ENCODE measurements at regions of chr14 and their contacts with region 1.

Region 1: GRCh38 chr14:68788996-68789820 is 3.7 kb downstream of the ZFP36L1 start:
- DNase-seq: peak; percentile 75 to 94 (median 90)
- ATAC-seq: peak; percentile 36
- H3K4me3 ChIP-seq: peak overlapping the region; percentile 94 to 97
- H3K4me3 Mint-ChIP-seq: peak overlapping the region; percentile 92
- H3K27ac ChIP-seq: peak overlapping the region; percentile 99 to 100
- H3K27ac Mint-ChIP-seq: peak overlapping the region; percentile 100
- H3K4me1 ChIP-seq: peaks cover 53% of the 10 kb centered on the region
- H3K4me1 Mint-ChIP-seq: peaks cover 58% of the 10 kb centered on the region
- H3K27me3 ChIP-seq: no peaks in the 10 kb centered on the region
- H3K27me3 Mint-ChIP-seq: no peaks in the 10 kb centered on the region
- CTCF ChIP-seq: peak; percentile 84

Region 2: DNA sequence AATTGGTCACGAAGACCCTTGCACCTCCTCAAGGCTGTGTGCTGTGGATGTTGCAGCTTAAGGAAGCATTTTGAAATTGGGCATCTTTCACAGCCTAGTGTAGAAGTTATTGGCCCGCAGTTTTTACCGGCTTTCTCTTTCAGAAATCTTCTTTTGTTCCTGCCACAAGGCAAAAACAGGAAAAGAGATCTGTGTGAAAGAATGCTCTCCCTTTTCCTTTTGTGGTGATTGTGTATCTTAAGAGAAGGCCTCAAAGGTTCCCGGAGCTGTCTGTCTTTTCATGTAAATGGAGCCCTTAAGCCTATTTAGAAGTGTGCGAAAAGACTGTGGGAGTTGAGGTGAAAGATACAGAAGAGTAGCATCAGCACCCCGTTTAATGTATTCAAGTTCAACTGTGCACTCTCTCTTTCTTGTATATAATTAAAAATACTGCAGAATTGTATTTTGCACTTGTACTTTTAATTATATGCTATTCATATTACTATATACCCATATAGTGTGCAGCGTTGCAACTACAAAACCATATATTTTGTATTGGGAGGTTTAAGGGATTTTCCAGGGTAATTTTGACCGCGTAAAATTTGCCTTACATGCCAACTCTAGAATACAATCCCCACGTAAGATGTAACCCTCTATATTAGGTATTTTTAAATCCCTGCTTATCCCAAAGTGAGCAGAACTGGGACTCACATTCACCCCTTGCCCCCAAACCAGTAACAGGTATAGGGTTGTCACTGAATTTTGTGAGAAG is 527.9 kb before region 1 on chr14:
- CTCF ChIA-PET with region 1: interaction called, 20 read pairs
- POLR2A ChIA-PET with region 1: interaction called, 6 read pairs
- intact Hi-C with region 1: no loop called
- DNase-seq: peak in 1 of 9 experiments; percentile 27
- ATAC-seq: no peak
- H3K4me3 ChIP-seq: no peak overlapping the region
- H3K4me3 Mint-ChIP-seq: peak overlapping the region; percentile 54
- H3K27ac ChIP-seq: peak overlapping the region in 1 of 2 experiments; percentile 41
- H3K27ac Mint-ChIP-seq: peak overlapping the region; percentile 91
- H3K4me1 ChIP-seq: peaks cover 48% of the 10 kb centered on the region
- H3K4me1 Mint-ChIP-seq: peaks cover 61% of the 10 kb centered on the region
- H3K27me3 ChIP-seq: no peaks in the 10 kb centered on the region
- H3K27me3 Mint-ChIP-seq: no peaks in the 10 kb centered on the region
- CTCF ChIP-seq: no peak

Region 3: GRCh38 chr14:68377459-68377858 is 411.7 kb before region 1 on chr14:
- CTCF ChIA-PET with region 1: interaction called, 13 read pairs
- POLR2A ChIA-PET with region 1: interaction called, 6 read pairs
- intact Hi-C with region 1: loop called in 1 of 2 experiments (anchors 5 kb)
- DNase-seq: peak in 2 of 9 experiments; percentile 6 to 45
- ATAC-seq: no peak
- H3K4me3 ChIP-seq: no peak overlapping the region
- H3K4me3 Mint-ChIP-seq: no peak overlapping the region
- H3K27ac ChIP-seq: peak overlapping the region in 1 of 2 experiments; percentile 32
- H3K27ac Mint-ChIP-seq: peak overlapping the region; percentile 74
- H3K4me1 ChIP-seq: peaks cover 61% of the 10 kb centered on the region
- H3K4me1 Mint-ChIP-seq: peaks cover 68% of the 10 kb centered on the region
- H3K27me3 ChIP-seq: no peaks in the 10 kb centered on the region
- H3K27me3 Mint-ChIP-seq: no peaks in the 10 kb centered on the region
- CTCF ChIP-seq: no peak

Region 4: GRCh38 chr14:68466491-68467032 is 322.6 kb before region 1 on chr14:
- CTCF ChIA-PET with region 1: interaction called, 10 read pairs
- POLR2A ChIA-PET with region 1: interaction called, 6 read pairs
- intact Hi-C with region 1: no loop called
- DNase-seq: no peak
- ATAC-seq: no peak
- H3K4me3 ChIP-seq: no peak overlapping the region
- H3K4me3 Mint-ChIP-seq: no peak overlapping the region
- H3K27ac ChIP-seq: no peak overlapping the region
- H3K27ac Mint-ChIP-seq: no peak overlapping the region
- H3K4me1 ChIP-seq: peaks cover 11% of the 10 kb centered on the region
- H3K4me1 Mint-ChIP-seq: peaks cover 19% of the 10 kb centered on the region
- H3K27me3 ChIP-seq: no peaks in the 10 kb centered on the region
- H3K27me3 Mint-ChIP-seq: no peaks in the 10 kb centered on the region
- CTCF ChIP-seq: no peak

Region 5: GRCh38 chr14:68506021-68506644 is 283.1 kb before region 1 on chr14:
- CTCF ChIA-PET with region 1: interaction called, 36 read pairs
- POLR2A ChIA-PET with region 1: interaction called, 90 read pairs
- intact Hi-C with region 1: loop called (anchors 2 kb)
- DNase-seq: peak in 1 of 9 experiments; percentile 25
- ATAC-seq: no peak
- H3K4me3 ChIP-seq: no peak overlapping the region
- H3K4me3 Mint-ChIP-seq: peak overlapping the region; percentile 64
- H3K27ac ChIP-seq: peak overlapping the region; percentile 49 to 52
- H3K27ac Mint-ChIP-seq: peak overlapping the region; percentile 91
- H3K4me1 ChIP-seq: peaks cover 64% of the 10 kb centered on the region
- H3K4me1 Mint-ChIP-seq: peaks cover 73% of the 10 kb centered on the region
- H3K27me3 ChIP-seq: no peaks in the 10 kb centered on the region
- H3K27me3 Mint-ChIP-seq: no peaks in the 10 kb centered on the region
- CTCF ChIP-seq: no peak

Region 6: DNA sequence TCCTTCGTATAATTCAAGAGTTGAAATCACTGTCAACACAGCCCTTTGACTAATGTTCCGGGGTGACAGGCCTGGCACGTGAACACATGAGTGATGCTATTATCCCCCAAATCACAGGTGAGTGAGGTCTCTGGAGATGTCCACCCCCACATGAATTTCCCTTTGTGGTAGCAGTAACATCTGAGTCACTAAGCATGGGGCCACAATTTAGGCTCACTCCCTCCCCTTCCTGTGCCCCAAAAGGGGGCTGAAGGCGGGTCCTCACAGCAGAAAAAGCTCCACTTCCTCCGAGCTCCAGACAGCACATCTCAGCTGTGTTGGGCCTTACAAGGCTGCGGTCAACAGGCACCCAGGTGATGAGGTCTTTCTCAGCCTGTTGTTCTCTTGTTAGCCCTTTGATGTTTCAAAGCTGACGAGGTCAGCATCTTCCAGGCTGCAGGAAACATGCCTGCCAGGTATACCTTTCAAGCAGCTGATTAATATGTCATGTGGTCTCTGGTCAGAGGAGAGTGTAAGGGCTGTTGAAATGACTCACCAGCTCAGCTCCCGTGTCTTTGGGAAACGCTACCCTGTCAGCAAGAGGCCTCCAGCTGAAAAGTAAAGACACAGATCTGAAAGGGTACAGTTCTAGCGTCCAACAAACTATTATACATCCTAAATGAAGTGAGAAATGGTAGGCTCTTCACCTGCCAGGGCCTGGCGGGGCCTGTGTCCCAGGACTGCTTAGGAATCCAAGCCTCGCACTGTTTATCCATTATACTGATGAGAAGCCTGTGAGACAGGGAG is 103.6 kb before region 1 on chr14:
- CTCF ChIA-PET with region 1: interaction called, 35 read pairs
- POLR2A ChIA-PET with region 1: interaction called, 36 read pairs
- intact Hi-C with region 1: loop called (anchors 1 to 2 kb)
- DNase-seq: peak; percentile 67 to 94 (median 84)
- ATAC-seq: peak; percentile 87
- H3K4me3 ChIP-seq: no peak overlapping the region
- H3K4me3 Mint-ChIP-seq: peak overlapping the region; percentile 23
- H3K27ac ChIP-seq: peak overlapping the region; percentile 50 to 70
- H3K27ac Mint-ChIP-seq: peak overlapping the region; percentile 96
- H3K4me1 ChIP-seq: peaks cover 56% of the 10 kb centered on the region
- H3K4me1 Mint-ChIP-seq: peaks cover 70% of the 10 kb centered on the region
- H3K27me3 ChIP-seq: no peaks in the 10 kb centered on the region
- H3K27me3 Mint-ChIP-seq: no peaks in the 10 kb centered on the region
- CTCF ChIP-seq: no peak

Region 7: DNA sequence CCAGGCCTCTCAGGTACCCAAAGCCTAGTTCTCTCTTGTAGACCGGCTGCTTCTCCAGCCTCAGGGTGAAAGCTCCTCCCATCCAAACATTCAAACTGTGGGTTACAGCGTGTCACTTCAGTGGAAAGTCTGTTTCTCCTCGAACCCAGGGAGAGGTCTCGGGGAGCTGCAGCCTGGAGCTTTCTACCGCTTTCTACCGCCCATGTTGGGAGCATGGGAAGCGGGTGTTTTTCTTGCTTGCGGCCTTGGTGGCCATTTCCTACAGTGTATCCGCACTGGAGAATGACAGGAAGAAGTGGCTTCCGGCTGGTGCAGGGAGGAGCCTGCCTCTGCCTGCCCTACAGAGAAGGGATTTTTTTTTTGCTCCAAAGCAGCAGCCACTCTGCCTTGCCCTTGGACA is 17.6 kb before region 1 on chr14:
- CTCF ChIA-PET with region 1: interaction called, 15 read pairs
- POLR2A ChIA-PET with region 1: interaction called, 13 read pairs
- intact Hi-C with region 1: no loop called
- DNase-seq: peak in 1 of 9 experiments; percentile 53
- ATAC-seq: peak; percentile 32
- H3K4me3 ChIP-seq: peak overlapping the region; percentile 6 to 7
- H3K4me3 Mint-ChIP-seq: peak overlapping the region; percentile 63
- H3K27ac ChIP-seq: peak overlapping the region in 1 of 2 experiments; percentile 27
- H3K27ac Mint-ChIP-seq: peak overlapping the region; percentile 83
- H3K4me1 ChIP-seq: peaks cover 57% of the 10 kb centered on the region
- H3K4me1 Mint-ChIP-seq: peaks cover 63% of the 10 kb centered on the region
- H3K27me3 ChIP-seq: no peaks in the 10 kb centered on the region
- H3K27me3 Mint-ChIP-seq: no peaks in the 10 kb centered on the region
- CTCF ChIP-seq: no peak

Measured in CD8-positive, alpha-beta T cell (primary cell).